MCF 10A (cell line): ENCODE measurements at regions of chr5 and their contacts with region 1.

Region 1: GRCh38 chr5:7886849-7887475 is 18.0 kb downstream of the MTRR start:
- DNase-seq: peak; percentile 43
- H3K4me3 Mint-ChIP-seq: no peak overlapping the region
- H3K27ac Mint-ChIP-seq: no peak overlapping the region
- H3K4me1 Mint-ChIP-seq: no peaks in the 10 kb centered on the region
- H3K27me3 Mint-ChIP-seq: no peaks in the 10 kb centered on the region
- CTCF ChIP-seq: peak; percentile 39

Region 2: GRCh38 chr5:7868773-7869473 is 18.0 kb before region 1 on chr5 and contains the starts of genes FASTKD3 and MTRR:
- CTCF ChIA-PET with region 1: interaction called, 23 read pairs
- POLR2A ChIA-PET with region 1: interaction called, 30 read pairs
- intact Hi-C with region 1: no loop called
- DNase-seq: peak; percentile 92
- H3K4me3 Mint-ChIP-seq: peak within 1 kb of the TSS; percentile 84
- H3K27ac Mint-ChIP-seq: peak within 1 kb of the TSS; percentile 83
- H3K4me1 Mint-ChIP-seq: peaks cover 23% of the 10 kb centered on the region
- H3K27me3 Mint-ChIP-seq: no peaks in the 10 kb centered on the region
- CTCF ChIP-seq: no peak
- total RNA-seq, gene FASTKD3: 7.8 and 7.9 TPM in 2 replicates
- total RNA-seq, gene MTRR: 46.6 and 88.6 TPM in 2 replicates

Region 3: GRCh38 chr5:7897014-7897632 is 10.2 kb after region 1 on chr5:
- CTCF ChIA-PET with region 1: interaction called, 20 read pairs
- POLR2A ChIA-PET with region 1: interaction called, 5 read pairs
- intact Hi-C with region 1: no loop called
- DNase-seq: peak; percentile 74
- H3K4me3 Mint-ChIP-seq: no peak overlapping the region
- H3K27ac Mint-ChIP-seq: no peak overlapping the region
- H3K4me1 Mint-ChIP-seq: no peaks in the 10 kb centered on the region
- H3K27me3 Mint-ChIP-seq: no peaks in the 10 kb centered on the region
- CTCF ChIP-seq: peak; percentile 45

Region 4: DNA sequence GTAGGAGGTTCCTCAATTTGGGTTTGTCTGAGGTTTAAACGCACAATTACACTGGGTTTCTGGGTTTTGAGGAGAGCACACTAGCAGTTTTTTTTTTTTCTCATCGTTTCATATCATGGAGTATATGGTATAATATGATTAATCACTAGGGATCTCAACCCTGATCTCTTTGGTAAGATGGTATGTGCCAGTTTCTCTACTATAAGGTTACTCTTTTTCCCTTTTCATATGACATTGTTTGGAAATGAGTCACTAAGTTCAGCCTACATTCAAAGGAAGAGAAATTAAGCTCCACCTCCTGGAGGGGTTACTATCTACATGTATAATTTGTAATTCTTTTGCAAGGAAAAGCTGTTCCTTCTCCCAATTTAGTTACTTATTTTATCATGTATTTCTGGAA is 17.2 kb after region 1 on chr5:
- CTCF ChIA-PET with region 1: interaction called, 14 read pairs
- POLR2A ChIA-PET with region 1: interaction called, 5 read pairs
- intact Hi-C with region 1: no loop called
- DNase-seq: peak; percentile 67
- H3K4me3 Mint-ChIP-seq: no peak overlapping the region
- H3K27ac Mint-ChIP-seq: peak overlapping the region; percentile 57
- H3K4me1 Mint-ChIP-seq: peaks cover 14% of the 10 kb centered on the region
- H3K27me3 Mint-ChIP-seq: no peaks in the 10 kb centered on the region
- CTCF ChIP-seq: no peak